ENCODE measurements at regions of chr1 and their contacts with region 1.

Region 1: DNA sequence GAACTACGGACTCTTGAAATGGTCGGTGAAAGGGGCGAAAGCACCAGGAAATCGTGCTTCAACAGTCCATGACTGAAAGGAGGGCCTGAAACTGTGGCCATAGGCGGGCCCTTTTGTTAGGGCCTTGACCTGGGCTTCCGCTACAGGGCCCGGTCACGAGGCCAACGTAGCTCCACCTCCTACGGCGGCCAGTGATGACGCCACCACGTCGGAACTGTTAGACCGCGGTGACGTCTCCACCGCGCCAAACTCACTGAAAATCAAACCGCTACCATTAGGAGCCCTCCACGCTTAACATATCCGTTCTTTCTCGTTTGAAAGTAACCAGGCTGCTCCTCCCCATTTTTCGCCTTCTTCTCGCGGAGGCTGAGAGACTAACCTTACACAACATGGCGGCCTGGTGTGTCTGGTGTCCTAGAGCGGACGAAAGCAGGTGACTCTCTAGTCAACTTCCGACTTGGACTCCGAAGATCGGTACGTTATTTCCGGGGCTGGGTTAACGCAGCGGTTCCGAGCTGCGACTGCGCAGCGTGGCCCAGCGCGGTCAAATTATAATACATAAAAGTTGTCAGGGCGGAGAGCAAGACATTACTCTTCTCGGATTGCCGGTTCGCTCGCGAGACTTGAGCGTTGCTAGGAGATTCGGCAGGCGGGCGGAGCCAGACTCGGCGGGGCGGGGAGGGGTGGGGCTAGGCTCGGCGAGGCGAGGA is 376 bp upstream of the CACYBP start:
- DNase-seq: peak; percentile 96 to 99 (median 98)
- H3K4me3 ChIP-seq: peak overlapping the region; percentile 67 to 99 (median 92)
- H3K27ac ChIP-seq: peak overlapping the region; percentile 98 to 100 (median 100)
- H3K27me3 ChIP-seq: no peaks in the 10 kb centered on the region
- CTCF ChIP-seq: no peak

Region 2: DNA sequence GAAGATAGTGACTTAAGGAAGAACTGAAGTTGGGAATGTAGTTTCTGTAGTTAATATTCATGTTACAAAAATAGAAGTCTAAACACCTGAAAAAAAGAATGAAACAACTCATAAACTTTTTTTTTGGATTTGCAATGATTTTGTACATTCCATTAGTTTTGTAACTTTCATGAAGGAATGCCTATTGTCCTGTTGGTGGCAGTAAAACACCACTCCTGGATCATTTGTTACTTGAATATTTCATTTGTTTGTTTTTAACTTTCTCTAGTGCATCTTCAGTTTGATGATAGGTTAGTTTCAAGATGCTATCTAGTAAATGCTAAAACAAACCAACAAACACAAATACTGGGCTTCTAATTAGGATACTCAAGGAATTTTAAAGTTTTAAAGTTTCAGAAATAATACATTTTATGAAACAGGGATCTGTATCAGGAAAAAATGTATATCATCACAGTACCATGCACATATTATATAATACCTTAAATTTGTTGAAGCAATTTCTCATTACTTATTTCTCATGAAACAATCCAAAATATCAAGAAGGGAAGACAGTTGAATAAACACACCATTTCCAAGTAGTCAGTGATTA is 229.3 kb before region 1 on chr1:
- intact Hi-C with region 1: loop called in 1 of 2 experiments (anchors 2 kb)
- DNase-seq: no peak
- H3K4me3 ChIP-seq: peak overlapping the region in 1 of 59 donors; percentile 5
- H3K27ac ChIP-seq: peak overlapping the region in 1 of 59 donors; percentile 24
- H3K27me3 ChIP-seq: no peaks in the 10 kb centered on the region
- CTCF ChIP-seq: peak; percentile 51 to 96 (median 84)

Region 3: DNA sequence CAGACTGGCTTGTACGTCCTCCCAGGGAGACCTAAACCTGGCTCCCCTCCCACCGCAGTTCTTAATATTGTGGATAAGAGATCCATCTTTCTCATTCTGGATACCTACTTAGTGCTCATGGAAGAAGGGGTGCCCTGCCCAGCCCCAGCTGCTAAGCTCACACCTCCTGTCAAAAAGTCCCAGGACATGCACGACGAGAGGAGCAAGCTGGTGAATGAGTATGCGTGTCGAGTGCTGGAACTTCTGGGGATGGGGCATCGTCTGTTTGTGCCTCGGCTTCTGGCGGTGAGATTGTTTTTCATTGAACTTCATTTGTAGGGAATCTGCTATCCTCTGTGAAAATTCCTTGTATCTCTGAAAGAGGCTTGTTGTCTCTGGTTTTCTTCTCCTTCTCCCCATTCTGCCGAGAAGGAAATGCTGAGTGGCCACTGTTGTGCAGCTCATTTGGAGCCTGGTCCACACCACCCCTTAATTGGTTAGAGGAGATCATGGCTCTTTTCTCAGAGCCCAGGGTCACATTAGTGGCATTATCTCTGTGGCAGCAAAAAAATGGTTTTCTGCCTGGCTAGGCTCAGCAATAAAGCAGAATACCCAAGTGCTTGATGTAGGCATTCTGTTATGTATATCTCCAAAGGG is 199.0 kb before region 1 on chr1:
- intact Hi-C with region 1: loop called in 1 of 2 experiments (anchors 2 kb)
- DNase-seq: peak in 3 of 10 donors; percentile 42 to 53 (median 50)
- H3K4me3 ChIP-seq: peak overlapping the region; percentile 39 to 92 (median 71)
- H3K27ac ChIP-seq: peak overlapping the region; percentile 41 to 97 (median 89)
- H3K27me3 ChIP-seq: no peaks in the 10 kb centered on the region
- CTCF ChIP-seq: no peak

Region 4: DNA sequence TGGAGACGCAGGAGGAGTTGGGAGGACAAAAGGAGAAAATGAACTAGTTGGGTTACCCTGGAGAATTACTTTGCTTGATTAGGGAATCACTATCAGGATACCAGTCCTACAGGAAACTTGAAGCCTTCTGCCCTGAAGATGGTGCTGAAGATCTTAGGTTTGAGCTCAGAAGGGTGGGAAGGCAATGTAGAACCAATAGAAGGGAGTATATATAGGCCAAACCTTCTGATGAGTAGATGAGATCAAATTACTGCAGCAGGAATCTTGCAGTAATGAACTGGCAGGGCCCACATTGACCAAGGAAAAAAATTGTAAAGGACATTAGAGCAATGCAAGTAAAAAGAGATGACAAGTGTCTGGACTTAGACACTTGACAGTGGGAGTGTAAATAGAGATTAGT is 116.0 kb before region 1 on chr1:
- intact Hi-C with region 1: loop called in 1 of 2 experiments (anchors 5 kb)
- DNase-seq: no peak
- H3K4me3 ChIP-seq: no peak overlapping the region
- H3K27ac ChIP-seq: peak overlapping the region in 13 of 59 donors; percentile 5 to 32 (median 15)
- H3K27me3 ChIP-seq: no peaks in the 10 kb centered on the region
- CTCF ChIP-seq: peak in 16 of 56 donors; percentile 14 to 44 (median 22)

Region 5: DNA sequence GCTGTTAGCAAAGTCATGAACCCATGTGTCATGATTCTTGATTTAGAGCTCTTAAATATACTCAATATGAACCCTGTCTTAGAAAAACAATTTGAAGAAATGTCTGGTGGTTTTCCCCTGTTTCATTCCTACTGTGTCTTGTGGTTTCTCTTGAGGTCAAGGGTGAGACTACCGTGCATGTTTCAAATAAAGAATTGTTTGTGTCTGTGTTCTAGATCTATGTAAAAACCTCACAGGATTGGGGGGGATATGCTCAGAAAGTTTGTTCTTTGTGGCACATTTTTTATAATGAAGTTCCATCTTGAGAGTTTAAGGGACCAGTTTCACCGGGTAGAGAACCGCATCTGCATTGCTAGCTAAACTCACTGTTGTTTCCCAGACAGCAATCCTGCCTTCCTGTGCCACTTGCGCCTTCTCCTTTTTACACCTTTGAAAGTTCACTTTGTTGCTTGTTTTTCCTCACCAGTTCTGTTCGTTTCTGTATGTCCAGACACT is 30.6 kb before region 1 on chr1:
- intact Hi-C with region 1: loop called in 1 of 2 experiments (anchors 1 kb)
- DNase-seq: no peak
- H3K4me3 ChIP-seq: no peak overlapping the region
- H3K27ac ChIP-seq: peak overlapping the region in 24 of 59 donors; percentile 0 to 85 (median 26)
- H3K27me3 ChIP-seq: no peaks in the 10 kb centered on the region
- CTCF ChIP-seq: no peak

Region 6: GRCh38 chr1:175023043-175023921 is 23.9 kb after region 1 on chr1 and contains the start of gene MRPS14:
- intact Hi-C with region 1: loop called in 1 of 2 experiments (anchors 2 kb)
- DNase-seq: peak; percentile 89 to 98 (median 96)
- H3K4me3 ChIP-seq: peak within 1 kb of the TSS; percentile 72 to 100 (median 88)
- H3K27ac ChIP-seq: peak within 1 kb of the TSS; percentile 43 to 95 (median 89)
- H3K27me3 ChIP-seq: no peaks in the 10 kb centered on the region
- CTCF ChIP-seq: peak in 33 of 56 donors; percentile 9 to 58 (median 30)
- total RNA-seq, gene MRPS14: 23.2 to 47.2 (median 33.2) TPM

Region 7: DNA sequence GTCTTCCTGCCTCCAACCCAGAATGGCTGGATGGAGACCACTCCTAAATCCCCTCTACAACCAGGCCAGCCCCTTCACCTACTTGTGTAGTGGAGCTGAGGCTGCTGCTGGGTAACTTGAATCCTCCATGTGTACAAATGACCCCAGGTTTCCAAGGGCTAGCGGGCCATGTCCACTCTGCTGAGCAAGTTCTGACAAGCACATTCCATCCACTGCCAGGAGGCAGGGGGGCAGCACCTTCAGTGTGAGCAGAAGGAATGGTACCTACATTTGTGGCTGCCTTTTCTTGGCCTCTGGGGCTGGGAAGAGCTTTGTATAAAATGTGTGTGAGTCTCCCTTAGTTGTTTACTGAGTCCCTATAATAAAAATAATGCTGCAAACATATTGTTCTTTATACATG is 178.7 kb after region 1 on chr1:
- intact Hi-C with region 1: no loop called
- DNase-seq: no peak
- H3K4me3 ChIP-seq: no peak overlapping the region
- H3K27ac ChIP-seq: no peak overlapping the region
- H3K27me3 ChIP-seq: peaks cover 0 to 5% (median 0%) of the 10 kb centered on the region in 45 donors
- CTCF ChIP-seq: no peak

Region 8: DNA sequence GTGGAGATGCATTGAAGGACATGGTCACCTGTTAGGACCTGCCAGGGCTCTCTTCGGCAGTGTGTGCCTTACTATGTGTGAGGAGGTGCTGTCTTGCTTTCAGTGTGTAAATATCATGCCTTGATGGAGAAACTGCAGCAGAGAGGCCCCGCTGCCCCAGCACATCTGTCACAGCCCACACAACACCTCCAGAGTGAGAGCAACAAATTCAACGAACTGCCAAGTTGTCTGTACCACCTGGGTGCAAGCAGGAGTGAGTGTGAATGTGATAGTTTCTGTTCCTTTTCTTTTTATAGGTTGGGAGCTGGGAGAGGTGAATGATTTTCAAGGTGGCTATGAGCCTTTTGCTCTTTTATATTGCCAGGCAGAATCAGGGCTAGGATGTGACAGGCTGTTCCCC is 307.8 kb after region 1 on chr1:
- intact Hi-C with region 1: no loop called
- DNase-seq: peak in 1 of 10 donors; percentile 35
- H3K4me3 ChIP-seq: no peak overlapping the region
- H3K27ac ChIP-seq: no peak overlapping the region
- H3K27me3 ChIP-seq: peaks cover 0 to 3% (median 0%) of the 10 kb centered on the region in 45 donors
- CTCF ChIP-seq: no peak

Region 9: DNA sequence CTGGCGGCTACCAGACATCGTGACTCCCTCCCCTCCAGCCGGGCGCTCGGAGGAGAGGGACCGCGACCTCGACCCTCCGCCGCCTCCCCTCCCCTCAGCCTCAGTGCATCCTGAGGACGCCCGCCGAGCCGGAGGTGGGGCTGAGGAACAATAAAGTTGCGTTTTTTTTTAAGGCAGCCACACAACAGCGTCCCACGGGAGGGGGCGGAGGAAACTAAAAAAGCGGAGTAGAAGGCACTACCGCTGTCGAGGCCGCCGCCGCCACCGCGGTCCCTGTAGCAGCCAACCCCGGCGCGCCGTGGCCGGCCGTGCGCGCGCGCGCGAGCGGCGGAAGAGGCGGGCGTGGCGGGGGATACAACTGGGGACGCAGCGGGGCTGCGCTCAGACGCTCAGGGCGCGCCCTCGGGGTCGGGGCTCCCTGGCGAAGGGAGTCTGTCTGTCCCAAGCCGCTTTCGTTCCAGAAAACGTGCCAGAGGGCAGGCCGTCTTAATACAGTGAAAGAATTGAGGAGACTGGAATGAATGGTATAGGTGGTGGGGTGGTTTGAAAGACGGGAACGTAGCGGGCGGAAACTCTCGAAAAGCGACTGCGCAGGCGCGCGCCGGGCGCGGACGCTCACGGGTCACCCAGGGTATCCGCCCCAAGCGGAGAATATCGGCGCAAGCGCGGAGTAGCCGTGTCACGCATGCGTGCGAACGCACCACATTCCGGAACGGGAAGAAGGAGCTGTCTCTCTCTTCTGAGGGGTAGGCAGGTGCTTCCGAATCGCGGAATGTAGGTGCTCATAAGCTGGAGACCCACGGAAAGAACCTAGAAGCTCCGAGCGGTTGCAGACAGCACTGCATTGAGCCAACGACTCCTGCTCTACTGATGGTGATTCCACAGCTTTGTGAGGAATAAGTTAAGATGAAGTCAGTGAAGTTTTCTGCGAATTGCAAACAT is 1207.9 kb after region 1 on chr1 and contains the start of gene COP1:
- intact Hi-C with region 1: loop called in 1 of 2 experiments (anchors 10 kb)
- DNase-seq: peak; percentile 94 to 98 (median 96)
- H3K4me3 ChIP-seq: peak within 1 kb of the TSS; percentile 65 to 100 (median 95)
- H3K27ac ChIP-seq: peak within 1 kb of the TSS; percentile 53 to 98 (median 92)
- H3K27me3 ChIP-seq: no peaks in the 10 kb centered on the region
- CTCF ChIP-seq: peak in 34 of 56 donors; percentile 3 to 59 (median 26)
- total RNA-seq, gene COP1: 29.3 to 63.5 (median 42.5) TPM